Activated T-helper 2 cell treated with anti-CD3 and anti-CD28 coated beads, Interferon-gamma antibody, Interleukin-2, Interleukin-4, amounts not matched to agents 10 μg/mL and 5 μg/mL and 100 μg/mL, durations not matched to agents 14 hours and 24 hours and 36 hours (primary cell): ENCODE measurements at regions of chr2 and their contacts with region 1.

Region 1: GRCh38 chr2:160210599-160211138 is 10.6 kb upstream of the ITGB6 start:
- DNase-seq: peak; percentile 53
- H3K4me3 Mint-ChIP-seq: no peak overlapping the region
- H3K27ac Mint-ChIP-seq: no peak overlapping the region
- H3K4me1 Mint-ChIP-seq: peaks cover 18% of the 10 kb centered on the region
- H3K27me3 Mint-ChIP-seq: peaks cover 24% of the 10 kb centered on the region

Region 2: DNA sequence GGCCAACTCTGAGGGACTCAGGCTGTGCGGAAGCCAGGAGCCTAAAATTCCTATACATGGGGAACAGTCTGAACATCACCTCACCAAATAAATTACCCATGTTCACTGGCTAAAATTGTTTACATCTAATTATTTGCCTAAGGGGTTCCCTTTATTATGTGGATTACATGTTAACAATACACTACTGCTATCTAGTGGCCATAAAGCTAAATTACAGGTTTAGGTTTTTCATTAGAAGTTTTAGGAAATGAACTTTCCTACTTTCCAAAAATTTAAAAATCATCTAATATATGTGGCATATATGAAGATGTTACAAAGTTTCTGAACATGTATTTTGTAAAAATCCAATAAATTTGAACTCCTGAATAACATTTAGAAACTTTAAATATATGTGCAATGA is 188.5 kb before region 1 on chr2:
- intact Hi-C with region 1: no loop called
- DNase-seq: no peak
- H3K4me3 Mint-ChIP-seq: no peak overlapping the region
- H3K27ac Mint-ChIP-seq: no peak overlapping the region
- H3K4me1 Mint-ChIP-seq: no peaks in the 10 kb centered on the region
- H3K27me3 Mint-ChIP-seq: peaks cover 4% of the 10 kb centered on the region

Region 3: GRCh38 chr2:160109936-160110673 is 100.6 kb before region 1 on chr2:
- intact Hi-C with region 1: loop called (anchors 1 kb)
- DNase-seq: peak; percentile 14
- H3K4me3 Mint-ChIP-seq: no peak overlapping the region
- H3K27ac Mint-ChIP-seq: no peak overlapping the region
- H3K4me1 Mint-ChIP-seq: no peaks in the 10 kb centered on the region
- H3K27me3 Mint-ChIP-seq: peaks cover 3% of the 10 kb centered on the region